ENCODE measurements at regions of chr1 and their contacts with region 1.

Region 1: GRCh38 chr1:147084273-147085096 is 87.8 kb downstream of the PRKAB2 start:
- DNase-seq: peak; percentile 55 to 90 (median 81)
- H3K4me3 ChIP-seq: peak overlapping the region; percentile 66 to 79
- H3K4me3 Mint-ChIP-seq: peak overlapping the region; percentile 94 to 99 (median 96)
- H3K27ac ChIP-seq: peak overlapping the region; percentile 62
- H3K27ac Mint-ChIP-seq: peak overlapping the region; percentile 97 to 100 (median 99)
- H3K4me1 ChIP-seq: peaks cover 23% of the 10 kb centered on the region
- H3K4me1 Mint-ChIP-seq: peaks cover 13 to 46% (median 34%) of the 10 kb centered on the region in 4 donors
- H3K27me3 ChIP-seq: peaks cover 18% of the 10 kb centered on the region
- H3K27me3 Mint-ChIP-seq: peaks cover 27 to 32% of the 10 kb centered on the region in 2 donors

Region 2: GRCh38 chr1:147039916-147040315 is 44.6 kb before region 1 on chr1:
- CTCF ChIA-PET with region 1: interaction called, 3 read pairs
- POLR2A ChIA-PET with region 1: interaction called, 61 read pairs
- intact Hi-C with region 1: loop called (anchors 5 kb)
- DNase-seq: no peak
- H3K4me3 ChIP-seq: no peak overlapping the region
- H3K4me3 Mint-ChIP-seq: peak overlapping the region in 5 of 8 donors; percentile 65 to 81 (median 75)
- H3K27ac ChIP-seq: no peak overlapping the region
- H3K27ac Mint-ChIP-seq: peak overlapping the region in 4 of 7 donors; percentile 58 to 78 (median 74)
- H3K4me1 ChIP-seq: no peaks in the 10 kb centered on the region
- H3K4me1 Mint-ChIP-seq: peaks cover 3 to 28% (median 17%) of the 10 kb centered on the region in 4 donors
- H3K27me3 ChIP-seq: no peaks in the 10 kb centered on the region
- H3K27me3 Mint-ChIP-seq: no peaks in the 10 kb centered on the region

Region 3: DNA sequence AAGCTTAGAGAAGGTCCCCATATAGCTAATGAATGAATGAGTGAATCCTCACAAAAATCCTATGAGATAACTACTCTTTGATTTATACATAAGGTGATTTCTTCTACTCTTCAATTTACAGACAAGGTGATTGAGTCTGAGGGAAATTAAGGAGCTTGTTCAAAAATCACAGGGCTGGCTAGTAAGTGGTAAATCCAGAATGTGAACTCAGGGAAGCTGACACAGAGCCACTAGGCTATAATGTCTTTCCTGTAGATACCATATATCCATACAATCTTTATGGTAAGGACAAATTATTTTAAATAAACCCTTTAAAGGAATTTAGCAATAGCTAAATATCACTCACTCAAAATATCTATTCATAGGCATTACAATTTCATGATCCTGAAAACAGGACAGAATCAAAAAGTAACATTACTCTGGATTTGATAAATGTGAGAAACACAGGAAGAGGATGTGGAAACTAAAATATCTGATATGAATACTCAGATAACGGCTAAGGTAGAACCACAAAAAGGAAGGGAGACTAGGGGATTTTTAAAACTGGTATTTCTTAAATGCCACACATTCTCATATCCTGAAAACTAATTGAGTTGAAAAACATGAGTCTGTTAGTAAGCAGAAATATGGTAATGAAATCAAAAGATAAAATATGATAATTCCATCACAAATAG is 38.2 kb before region 1 on chr1:
- CTCF ChIA-PET with region 1: interaction called, 3 read pairs
- POLR2A ChIA-PET with region 1: interaction called, 61 read pairs
- intact Hi-C with region 1: loop called (anchors 5 kb)
- DNase-seq: peak in 3 of 5 donors; percentile 1 to 31 (median 6)
- H3K4me3 ChIP-seq: no peak overlapping the region
- H3K4me3 Mint-ChIP-seq: peak overlapping the region; percentile 7 to 91 (median 76)
- H3K27ac ChIP-seq: no peak overlapping the region
- H3K27ac Mint-ChIP-seq: peak overlapping the region; percentile 67 to 95 (median 83)
- H3K4me1 ChIP-seq: peaks cover 29% of the 10 kb centered on the region
- H3K4me1 Mint-ChIP-seq: peaks cover 21 to 72% (median 45%) of the 10 kb centered on the region in 4 donors
- H3K27me3 ChIP-seq: no peaks in the 10 kb centered on the region
- H3K27me3 Mint-ChIP-seq: no peaks in the 10 kb centered on the region

Region 4: DNA sequence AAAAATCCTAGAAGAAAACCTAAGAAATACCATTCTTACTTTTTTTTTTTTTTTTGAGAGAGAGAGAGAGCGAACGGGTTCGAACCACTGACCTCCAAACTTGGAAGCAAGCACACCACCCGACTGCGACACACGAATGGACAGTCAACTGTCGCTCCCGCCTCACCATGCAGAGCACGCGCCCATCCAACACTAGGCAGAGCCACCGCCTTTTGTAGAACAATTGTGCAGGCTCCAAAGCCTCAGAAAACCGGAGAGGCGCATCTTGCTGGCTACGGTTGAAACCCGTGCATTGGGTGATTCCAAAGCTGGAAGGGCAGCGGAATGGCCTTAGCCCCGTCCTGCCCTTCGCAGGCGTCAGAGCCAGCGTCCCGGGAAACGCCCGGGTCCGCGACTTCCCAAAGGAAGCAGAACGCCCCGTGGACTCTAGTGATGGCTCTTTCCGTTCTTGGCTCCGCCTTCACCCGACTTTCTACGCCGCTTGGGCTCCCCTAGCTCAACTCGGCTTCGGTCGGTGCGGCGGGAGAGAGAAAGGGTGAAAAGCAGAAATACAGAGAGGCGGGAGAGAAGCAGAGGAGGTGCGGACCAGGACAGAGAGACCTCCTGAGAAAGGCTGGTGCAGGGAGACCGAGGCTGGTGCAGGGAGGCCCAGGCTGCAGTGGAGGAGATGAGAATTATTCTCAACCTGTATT is 12.0 kb before region 1 on chr1:
- CTCF ChIA-PET with region 1: no interaction called
- POLR2A ChIA-PET with region 1: interaction called, 10 read pairs
- intact Hi-C with region 1: loop called (anchors 1 kb)
- DNase-seq: peak in 3 of 5 donors; percentile 27 to 35 (median 28)
- H3K4me3 ChIP-seq: peak overlapping the region; percentile 23
- H3K4me3 Mint-ChIP-seq: peak overlapping the region; percentile 66 to 99 (median 87)
- H3K27ac ChIP-seq: no peak overlapping the region
- H3K27ac Mint-ChIP-seq: peak overlapping the region in 4 of 7 donors; percentile 68 to 94 (median 82)
- H3K4me1 ChIP-seq: peaks cover 10% of the 10 kb centered on the region
- H3K4me1 Mint-ChIP-seq: peaks cover 6 to 41% (median 19%) of the 10 kb centered on the region in 4 donors
- H3K27me3 ChIP-seq: peaks cover 4% of the 10 kb centered on the region
- H3K27me3 Mint-ChIP-seq: peaks cover 24 to 28% of the 10 kb centered on the region in 2 donors

Region 5: DNA sequence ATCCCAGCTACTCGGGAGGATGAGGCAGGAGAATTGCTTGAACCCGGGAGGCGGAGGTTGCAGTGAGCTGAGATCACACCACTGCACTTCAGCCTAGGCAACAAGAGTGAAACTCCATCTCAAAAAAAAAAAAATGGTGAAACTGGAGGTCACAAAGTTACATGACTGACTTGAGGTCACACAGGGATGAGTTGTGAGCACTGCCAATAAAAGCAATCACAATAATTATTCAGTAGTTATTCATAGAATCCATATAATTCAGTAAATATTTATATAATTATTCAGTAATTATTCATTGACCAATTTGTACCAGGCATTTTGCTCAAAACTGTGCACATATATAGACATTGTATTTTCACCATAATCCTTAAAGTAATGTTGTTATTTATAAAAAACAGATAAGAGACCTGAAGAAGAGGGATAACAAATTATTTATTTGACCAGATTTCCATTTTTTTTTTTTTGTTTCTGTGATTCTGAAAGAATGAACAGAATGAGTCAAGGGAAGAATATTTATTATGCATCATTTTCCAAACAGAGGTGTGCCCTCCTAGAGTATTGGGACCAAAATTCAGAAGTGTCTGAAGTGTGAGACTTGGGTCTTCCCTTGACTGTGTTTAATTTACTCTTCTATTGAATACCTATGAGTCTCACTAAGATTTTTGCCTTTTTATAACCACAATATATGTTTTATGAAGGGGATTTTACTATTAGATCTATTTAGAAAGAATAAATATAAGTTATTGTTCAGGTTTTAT is 44.8 kb after region 1 on chr1:
- CTCF ChIA-PET with region 1: no interaction called
- POLR2A ChIA-PET with region 1: no interaction called
- intact Hi-C with region 1: no loop called
- DNase-seq: no peak
- H3K4me3 ChIP-seq: no peak overlapping the region
- H3K4me3 Mint-ChIP-seq: no peak overlapping the region
- H3K27ac ChIP-seq: no peak overlapping the region
- H3K27ac Mint-ChIP-seq: no peak overlapping the region
- H3K4me1 ChIP-seq: no peaks in the 10 kb centered on the region
- H3K4me1 Mint-ChIP-seq: no peaks in the 10 kb centered on the region
- H3K27me3 ChIP-seq: no peaks in the 10 kb centered on the region
- H3K27me3 Mint-ChIP-seq: peaks cover 8 to 18% of the 10 kb centered on the region in 2 donors

Region 6: GRCh38 chr1:147172168-147172992 is 87.9 kb after region 1 on chr1 and contains the start of gene PRKAB2:
- CTCF ChIA-PET with region 1: interaction called, 3 read pairs
- POLR2A ChIA-PET with region 1: interaction called, 26 read pairs
- intact Hi-C with region 1: loop called (anchors 5 kb)
- DNase-seq: peak; percentile 89 to 92 (median 90)
- H3K4me3 ChIP-seq: peak within 1 kb of the TSS; percentile 72 to 84
- H3K4me3 Mint-ChIP-seq: peak within 1 kb of the TSS; percentile 96 to 99 (median 98)
- H3K27ac ChIP-seq: peak within 1 kb of the TSS; percentile 75
- H3K27ac Mint-ChIP-seq: peak within 1 kb of the TSS; percentile 94 to 98 (median 96)
- H3K4me1 ChIP-seq: peaks cover 32% of the 10 kb centered on the region
- H3K4me1 Mint-ChIP-seq: peaks cover 21 to 43% (median 31%) of the 10 kb centered on the region in 4 donors
- H3K27me3 ChIP-seq: no peaks in the 10 kb centered on the region
- H3K27me3 Mint-ChIP-seq: peaks cover 0 to 1% of the 10 kb centered on the region in 2 donors
- total RNA-seq, gene PRKAB2: 19.8 to 24.5 TPM

Region 7: GRCh38 chr1:147242439-147243227 is 158.1 kb after region 1 on chr1 and contains the start of gene CHD1L:
- CTCF ChIA-PET with region 1: no interaction called
- POLR2A ChIA-PET with region 1: interaction called, 10 read pairs
- intact Hi-C with region 1: loop called (anchors 2 kb)
- DNase-seq: peak; percentile 91 to 93 (median 92)
- H3K4me3 ChIP-seq: peak within 1 kb of the TSS; percentile 21 to 84
- H3K4me3 Mint-ChIP-seq: peak within 1 kb of the TSS; percentile 92 to 97 (median 96)
- H3K27ac ChIP-seq: peak within 1 kb of the TSS; percentile 70
- H3K27ac Mint-ChIP-seq: peak within 1 kb of the TSS; percentile 60 to 93 (median 79)
- H3K4me1 ChIP-seq: peaks cover 37% of the 10 kb centered on the region
- H3K4me1 Mint-ChIP-seq: peaks cover 29 to 49% (median 31%) of the 10 kb centered on the region in 4 donors
- H3K27me3 ChIP-seq: no peaks in the 10 kb centered on the region
- H3K27me3 Mint-ChIP-seq: peaks cover 0 to 1% of the 10 kb centered on the region in 2 donors
- total RNA-seq, gene CHD1L: 29.5 to 31.6 TPM

Region 8: DNA sequence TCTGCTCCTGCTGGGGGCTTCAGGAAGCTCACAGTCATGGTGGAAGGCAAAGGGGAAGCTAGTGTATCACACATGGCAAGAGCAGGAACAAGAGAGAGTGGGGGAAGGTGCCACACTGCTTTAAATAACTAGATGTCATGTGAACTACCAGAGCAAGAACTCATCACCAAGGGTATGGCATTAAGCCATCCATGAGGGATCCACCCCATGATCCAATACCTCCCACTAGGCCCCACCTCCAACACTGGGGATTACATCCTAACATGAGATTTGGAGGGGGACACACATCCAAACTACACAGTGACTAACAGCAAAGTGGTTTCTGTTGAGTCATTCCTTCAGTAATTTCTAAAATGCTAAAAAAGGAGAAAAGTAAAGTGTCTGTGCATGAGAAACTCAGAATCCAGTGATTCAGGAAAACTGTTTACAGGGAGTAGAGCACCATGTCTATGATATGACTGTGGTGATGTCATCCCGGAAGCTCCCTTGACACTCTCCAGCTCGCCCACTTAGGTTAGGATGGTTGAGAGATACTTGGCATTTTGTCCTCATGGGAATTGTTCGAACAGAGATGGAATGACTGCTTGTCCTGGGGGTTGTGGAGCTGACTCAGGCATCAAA is 208.3 kb after region 1 on chr1:
- CTCF ChIA-PET with region 1: no interaction called
- POLR2A ChIA-PET with region 1: no interaction called
- intact Hi-C with region 1: no loop called
- DNase-seq: no peak
- H3K4me3 ChIP-seq: no peak overlapping the region
- H3K4me3 Mint-ChIP-seq: no peak overlapping the region
- H3K27ac ChIP-seq: no peak overlapping the region
- H3K27ac Mint-ChIP-seq: peak overlapping the region in 1 of 7 donors; percentile 33
- H3K4me1 ChIP-seq: no peaks in the 10 kb centered on the region
- H3K4me1 Mint-ChIP-seq: no peaks in the 10 kb centered on the region
- H3K27me3 ChIP-seq: no peaks in the 10 kb centered on the region
- H3K27me3 Mint-ChIP-seq: no peaks in the 10 kb centered on the region

Region 9: DNA sequence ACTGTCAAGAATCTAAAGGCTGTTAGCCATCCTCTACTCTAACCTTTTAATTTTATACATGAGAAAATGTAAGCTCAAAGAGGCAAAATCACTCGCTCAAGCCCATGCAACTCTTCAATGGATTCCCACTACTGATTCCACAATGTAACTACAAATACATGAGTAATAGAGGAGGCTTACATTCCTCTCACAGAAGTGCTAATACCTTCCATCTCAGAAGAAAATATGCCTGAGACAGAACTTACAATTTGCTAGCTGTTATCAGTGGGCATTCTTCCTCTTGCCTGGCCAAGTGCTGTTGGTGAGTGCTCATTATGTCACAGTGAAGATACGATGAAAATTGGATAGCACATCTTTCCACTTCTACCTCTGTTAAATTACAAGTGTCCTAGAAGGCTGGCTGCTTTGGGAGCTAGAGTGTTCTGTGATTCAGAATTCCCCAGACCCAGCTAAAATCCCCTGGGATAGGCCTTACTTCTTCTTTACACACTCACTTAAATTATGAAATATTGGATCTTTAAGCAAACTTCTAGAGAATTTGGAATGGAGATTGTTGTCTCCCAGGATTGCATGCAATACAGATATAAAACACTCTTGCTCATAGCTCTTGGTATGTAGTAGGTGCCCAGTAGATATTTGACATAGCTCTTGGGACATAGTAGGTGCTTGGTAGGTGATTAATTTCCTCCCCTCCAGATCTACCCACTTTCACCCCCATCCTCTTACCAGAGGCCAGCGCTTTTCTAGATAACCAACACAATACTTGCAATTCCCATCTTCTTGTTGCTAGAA is 480.9 kb after region 1 on chr1:
- CTCF ChIA-PET with region 1: no interaction called
- POLR2A ChIA-PET with region 1: no interaction called
- intact Hi-C with region 1: no loop called
- DNase-seq: no peak
- H3K4me3 ChIP-seq: no peak overlapping the region
- H3K4me3 Mint-ChIP-seq: no peak overlapping the region
- H3K27ac ChIP-seq: no peak overlapping the region
- H3K27ac Mint-ChIP-seq: no peak overlapping the region
- H3K4me1 ChIP-seq: no peaks in the 10 kb centered on the region
- H3K4me1 Mint-ChIP-seq: peaks cover 0 to 8% (median 7%) of the 10 kb centered on the region in 4 donors
- H3K27me3 ChIP-seq: no peaks in the 10 kb centered on the region
- H3K27me3 Mint-ChIP-seq: peaks cover 0 to 7% of the 10 kb centered on the region in 2 donors